Prostate gland (tissue), 2 donors: ENCODE measurements at regions of chr9 and their contacts with region 1.

Region 1: GRCh38 chr9:94213511-94214124 is 45.5 kb upstream of the ZNF169 start:
- DNase-seq: peak; percentile 72
- H3K4me3 ChIP-seq: no peak overlapping the region
- H3K27ac ChIP-seq: no peak overlapping the region
- H3K4me1 ChIP-seq: no peaks in the 10 kb centered on the region
- H3K27me3 ChIP-seq: no peaks in the 10 kb centered on the region
- CTCF ChIP-seq: peak; percentile 48 to 93 (median 88)
- POLR2A ChIP-seq: no peak

Region 2: DNA sequence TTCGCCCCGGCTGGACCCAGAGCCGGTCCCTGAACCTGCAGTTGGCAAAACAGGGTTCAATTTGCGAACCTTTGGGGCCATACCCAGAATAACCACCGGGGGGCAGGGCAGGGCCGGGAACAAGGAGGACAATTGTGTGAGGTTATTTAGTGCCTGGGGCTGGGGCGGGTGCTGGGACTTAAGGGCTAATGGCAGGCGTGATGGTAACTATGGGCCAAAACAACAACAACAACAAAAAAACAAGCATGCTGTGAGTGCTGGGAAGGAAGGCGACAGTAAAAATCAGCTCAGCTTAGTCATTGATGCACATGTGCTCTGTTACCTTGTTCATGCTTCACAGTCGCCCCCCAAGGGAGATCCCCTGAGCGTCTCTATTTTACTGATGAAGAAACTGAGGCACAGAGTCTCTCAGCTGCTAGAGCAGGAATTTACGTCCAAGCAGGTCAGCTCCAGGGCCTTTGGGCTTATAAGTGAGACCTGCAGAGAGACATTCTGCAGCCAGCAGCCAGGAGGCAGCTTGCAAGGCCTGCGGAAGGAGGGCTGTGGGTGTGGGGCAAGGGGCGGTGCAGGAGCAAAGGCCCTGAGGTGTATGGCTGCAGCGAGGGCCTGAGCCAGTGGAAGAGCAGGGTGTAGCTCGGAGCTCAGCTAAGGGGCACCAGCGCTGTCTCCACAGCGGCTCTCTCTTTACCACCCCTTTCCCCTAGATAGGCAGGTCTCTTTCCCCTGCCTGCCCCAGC is 531.2 kb before region 1 on chr9:
- intact Hi-C with region 1: loop called (anchors 2 kb)
- DNase-seq: peak; percentile 34
- H3K4me3 ChIP-seq: no peak overlapping the region
- H3K27ac ChIP-seq: no peak overlapping the region
- H3K4me1 ChIP-seq: no peaks in the 10 kb centered on the region
- H3K27me3 ChIP-seq: no peaks in the 10 kb centered on the region
- CTCF ChIP-seq: peak; percentile 69 to 82 (median 73)
- POLR2A ChIP-seq: no peak

Region 3: GRCh38 chr9:94065535-94065961 is 148.1 kb before region 1 on chr9:
- intact Hi-C with region 1: loop called (anchors 1 kb)
- DNase-seq: peak; percentile 81
- H3K4me3 ChIP-seq: no peak overlapping the region
- H3K27ac ChIP-seq: no peak overlapping the region
- H3K4me1 ChIP-seq: no peaks in the 10 kb centered on the region
- H3K27me3 ChIP-seq: no peaks in the 10 kb centered on the region
- CTCF ChIP-seq: peak; percentile 70 to 90 (median 86)
- POLR2A ChIP-seq: no peak

Region 4: GRCh38 chr9:94277885-94278536 is 64.4 kb after region 1 on chr9:
- intact Hi-C with region 1: no loop called
- DNase-seq: no peak
- H3K4me3 ChIP-seq: no peak overlapping the region
- H3K27ac ChIP-seq: no peak overlapping the region
- H3K4me1 ChIP-seq: no peaks in the 10 kb centered on the region
- H3K27me3 ChIP-seq: no peaks in the 10 kb centered on the region
- CTCF ChIP-seq: no peak
- POLR2A ChIP-seq: no peak